ENCODE measurements at regions of chr1 and their contacts with region 1.

Region 1: GRCh38 chr1:157580179-157580827 is 17.6 kb downstream of the FCRL4 start:
- DNase-seq: peak; percentile 83
- ATAC-seq: peak; percentile 44
- H3K4me3 ChIP-seq: no peak overlapping the region
- H3K4me3 Mint-ChIP-seq: no peak overlapping the region
- H3K27ac ChIP-seq: no peak overlapping the region
- H3K27ac Mint-ChIP-seq: no peak overlapping the region
- H3K4me1 ChIP-seq: peaks cover 61 to 62% of the 10 kb centered on the region in 2 donors
- H3K4me1 Mint-ChIP-seq: peaks cover 70% of the 10 kb centered on the region
- H3K27me3 ChIP-seq: no peaks in the 10 kb centered on the region
- H3K27me3 Mint-ChIP-seq: no peaks in the 10 kb centered on the region
- CTCF ChIP-seq: peak; percentile 94

Region 2: DNA sequence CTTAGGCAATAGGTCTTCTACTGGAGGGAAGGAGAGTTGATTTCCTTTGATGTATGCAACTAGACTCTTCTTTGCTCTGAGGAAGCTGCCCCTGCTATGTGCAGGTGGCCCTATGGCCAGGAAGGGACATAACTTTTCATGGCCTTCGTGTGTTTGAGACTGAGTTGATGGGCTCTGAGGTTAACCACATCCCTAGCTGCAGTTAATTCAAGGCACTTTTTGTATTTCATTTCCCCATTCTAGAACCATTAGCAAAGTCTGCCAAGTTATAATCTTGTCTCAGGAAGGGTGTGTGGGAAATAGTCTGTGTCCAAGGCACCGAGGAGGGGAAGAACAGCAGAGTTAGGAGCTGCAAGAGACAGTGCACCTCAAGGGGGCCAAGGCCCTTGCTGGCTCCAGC is 15.1 kb after region 1 on chr1:
- CTCF ChIA-PET with region 1: interaction called, 31 read pairs
- POLR2A ChIA-PET with region 1: no interaction called
- intact Hi-C with region 1: no loop called
- DNase-seq: peak; percentile 67
- ATAC-seq: peak; percentile 80
- H3K4me3 ChIP-seq: no peak overlapping the region
- H3K4me3 Mint-ChIP-seq: peak overlapping the region; percentile 44
- H3K27ac ChIP-seq: no peak overlapping the region
- H3K27ac Mint-ChIP-seq: peak overlapping the region; percentile 12
- H3K4me1 ChIP-seq: peaks cover 38 to 41% of the 10 kb centered on the region in 2 donors
- H3K4me1 Mint-ChIP-seq: peaks cover 41% of the 10 kb centered on the region
- H3K27me3 ChIP-seq: peaks cover 0 to 22% (median 8%) of the 10 kb centered on the region in 4 experiments
- H3K27me3 Mint-ChIP-seq: peaks cover 4% of the 10 kb centered on the region
- CTCF ChIP-seq: no peak

Region 3: GRCh38 chr1:157697781-157698569 is 117.7 kb after region 1 on chr1:
- CTCF ChIA-PET with region 1: interaction called, 15 read pairs
- POLR2A ChIA-PET with region 1: no interaction called
- intact Hi-C with region 1: no loop called
- DNase-seq: peak; percentile 51
- ATAC-seq: peak; percentile 34
- H3K4me3 ChIP-seq: peak overlapping the region in 3 of 5 experiments; percentile 35 to 73 (median 65)
- H3K4me3 Mint-ChIP-seq: peak overlapping the region; percentile 71
- H3K27ac ChIP-seq: peak overlapping the region; percentile 75 to 86
- H3K27ac Mint-ChIP-seq: peak overlapping the region; percentile 90
- H3K4me1 ChIP-seq: peaks cover 88 to 90% of the 10 kb centered on the region in 2 donors
- H3K4me1 Mint-ChIP-seq: peaks cover 93% of the 10 kb centered on the region
- H3K27me3 ChIP-seq: no peaks in the 10 kb centered on the region
- H3K27me3 Mint-ChIP-seq: no peaks in the 10 kb centered on the region
- CTCF ChIP-seq: no peak

Region 4: DNA sequence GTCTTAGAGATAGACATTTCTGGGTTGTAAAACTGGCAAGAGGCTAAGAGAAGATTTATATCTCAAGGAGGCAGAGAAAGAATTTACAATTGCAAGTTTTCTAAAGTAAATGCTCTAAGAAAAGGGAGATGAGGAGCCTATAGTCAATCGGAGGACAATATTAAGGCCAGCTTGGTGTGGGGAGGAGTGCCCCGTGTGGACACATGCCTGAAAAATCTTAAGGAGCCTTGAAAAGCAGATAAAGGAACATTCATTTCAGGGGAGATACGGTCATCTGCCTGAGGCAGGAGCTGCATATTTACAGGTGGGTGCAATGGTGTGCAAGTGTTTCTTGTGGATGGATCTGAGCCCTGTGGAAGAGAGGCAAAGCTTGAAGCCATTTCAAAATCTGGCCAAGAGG is 171.0 kb after region 1 on chr1:
- CTCF ChIA-PET with region 1: interaction called, 12 read pairs
- POLR2A ChIA-PET with region 1: interaction called, 3 read pairs
- intact Hi-C with region 1: no loop called
- DNase-seq: no peak
- ATAC-seq: no peak
- H3K4me3 ChIP-seq: no peak overlapping the region
- H3K4me3 Mint-ChIP-seq: no peak overlapping the region
- H3K27ac ChIP-seq: peak overlapping the region in 1 of 2 donors; percentile 9
- H3K27ac Mint-ChIP-seq: peak overlapping the region; percentile 72
- H3K4me1 ChIP-seq: peaks cover 12 to 16% of the 10 kb centered on the region in 2 donors
- H3K4me1 Mint-ChIP-seq: peaks cover 41% of the 10 kb centered on the region
- H3K27me3 ChIP-seq: no peaks in the 10 kb centered on the region
- H3K27me3 Mint-ChIP-seq: no peaks in the 10 kb centered on the region
- CTCF ChIP-seq: peak; percentile 8

Region 5: DNA sequence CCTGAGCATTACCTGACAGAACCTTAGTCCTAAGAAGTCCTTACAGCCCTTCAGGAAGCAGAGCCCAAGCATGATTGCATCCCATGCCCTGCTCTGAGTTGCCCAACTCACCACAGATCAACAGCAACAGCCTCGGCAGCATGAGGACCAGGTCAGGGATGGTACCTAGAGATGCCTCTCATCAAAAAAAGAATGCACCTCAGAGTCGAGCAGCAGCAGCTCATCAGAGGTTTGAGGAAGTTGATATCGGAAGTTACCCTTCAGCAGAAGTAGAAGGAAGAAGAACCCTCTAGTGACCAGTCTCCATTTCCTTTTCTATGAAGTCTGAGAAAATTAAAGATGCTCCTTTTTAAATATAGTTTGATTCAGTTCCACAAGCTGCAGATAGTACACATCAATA is 239.6 kb after region 1 on chr1 and contains the start of gene FCRL1:
- CTCF ChIA-PET with region 1: interaction called, 19 read pairs
- POLR2A ChIA-PET with region 1: no interaction called
- intact Hi-C with region 1: no loop called
- DNase-seq: peak; percentile 77
- ATAC-seq: peak; percentile 86
- H3K4me3 ChIP-seq: peak within 1 kb of the TSS; percentile 66 to 97 (median 84)
- H3K4me3 Mint-ChIP-seq: no peak within 1 kb of the TSS
- H3K27ac ChIP-seq: peak within 1 kb of the TSS; percentile 50 to 83
- H3K27ac Mint-ChIP-seq: no peak within 1 kb of the TSS
- H3K4me1 ChIP-seq: peaks cover 20 to 23% of the 10 kb centered on the region in 2 donors
- H3K4me1 Mint-ChIP-seq: peaks cover 55% of the 10 kb centered on the region
- H3K27me3 ChIP-seq: no peaks in the 10 kb centered on the region
- H3K27me3 Mint-ChIP-seq: no peaks in the 10 kb centered on the region
- CTCF ChIP-seq: no peak
- total RNA-seq, gene FCRL1: 277 and 306 TPM in 2 replicates

Region 6: DNA sequence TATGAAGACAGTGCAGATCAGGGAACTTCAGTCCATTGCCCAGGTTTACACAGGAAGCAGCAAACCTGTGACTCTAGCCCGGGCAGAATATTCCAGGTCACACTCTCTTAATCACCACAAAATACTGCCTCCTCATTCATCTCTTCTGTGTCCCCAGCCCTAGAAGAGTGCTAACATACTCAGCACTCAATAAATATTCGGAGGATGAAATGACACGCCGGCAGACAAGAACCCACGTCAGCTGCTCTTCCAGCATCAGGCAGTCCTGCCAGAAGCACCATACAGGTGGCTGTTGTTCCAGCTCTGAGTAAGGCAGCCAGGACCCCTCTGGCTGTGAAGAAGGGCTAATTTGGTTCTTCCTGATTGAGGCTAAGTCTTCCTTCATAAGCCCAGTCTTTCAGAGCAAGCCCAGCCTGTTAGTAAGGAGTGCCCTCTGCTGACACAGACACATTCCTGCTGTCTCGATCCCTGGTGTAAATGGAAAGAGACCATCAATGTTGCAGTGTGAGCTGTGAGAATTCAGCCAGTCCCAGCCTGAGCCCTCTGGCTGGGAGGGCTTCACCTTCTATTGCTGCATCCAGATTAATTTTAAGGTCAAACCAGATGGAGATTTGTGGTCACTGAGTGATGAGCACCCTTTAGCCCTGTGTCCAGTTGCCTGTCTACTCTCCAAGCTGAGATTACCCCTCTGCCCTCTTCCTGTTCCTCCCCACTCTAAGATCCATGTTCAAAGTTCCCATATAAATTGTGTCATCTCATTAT is 368.2 kb after region 1 on chr1:
- CTCF ChIA-PET with region 1: interaction called, 49 read pairs
- POLR2A ChIA-PET with region 1: no interaction called
- intact Hi-C with region 1: loop called (anchors 1 kb)
- DNase-seq: peak; percentile 63
- ATAC-seq: peak; percentile 53
- H3K4me3 ChIP-seq: no peak overlapping the region
- H3K4me3 Mint-ChIP-seq: no peak overlapping the region
- H3K27ac ChIP-seq: no peak overlapping the region
- H3K27ac Mint-ChIP-seq: no peak overlapping the region
- H3K4me1 ChIP-seq: peaks cover 17 to 18% of the 10 kb centered on the region in 2 donors
- H3K4me1 Mint-ChIP-seq: peaks cover 27% of the 10 kb centered on the region
- H3K27me3 ChIP-seq: peaks cover 0 to 8% (median 0%) of the 10 kb centered on the region in 4 experiments
- H3K27me3 Mint-ChIP-seq: peaks cover 12% of the 10 kb centered on the region
- CTCF ChIP-seq: peak; percentile 67

Measured in B cell (primary cell).